Heart right ventricle (tissue), 16 donors: ENCODE measurements at regions of chr10 and their contacts with region 1.

Region 1: DNA sequence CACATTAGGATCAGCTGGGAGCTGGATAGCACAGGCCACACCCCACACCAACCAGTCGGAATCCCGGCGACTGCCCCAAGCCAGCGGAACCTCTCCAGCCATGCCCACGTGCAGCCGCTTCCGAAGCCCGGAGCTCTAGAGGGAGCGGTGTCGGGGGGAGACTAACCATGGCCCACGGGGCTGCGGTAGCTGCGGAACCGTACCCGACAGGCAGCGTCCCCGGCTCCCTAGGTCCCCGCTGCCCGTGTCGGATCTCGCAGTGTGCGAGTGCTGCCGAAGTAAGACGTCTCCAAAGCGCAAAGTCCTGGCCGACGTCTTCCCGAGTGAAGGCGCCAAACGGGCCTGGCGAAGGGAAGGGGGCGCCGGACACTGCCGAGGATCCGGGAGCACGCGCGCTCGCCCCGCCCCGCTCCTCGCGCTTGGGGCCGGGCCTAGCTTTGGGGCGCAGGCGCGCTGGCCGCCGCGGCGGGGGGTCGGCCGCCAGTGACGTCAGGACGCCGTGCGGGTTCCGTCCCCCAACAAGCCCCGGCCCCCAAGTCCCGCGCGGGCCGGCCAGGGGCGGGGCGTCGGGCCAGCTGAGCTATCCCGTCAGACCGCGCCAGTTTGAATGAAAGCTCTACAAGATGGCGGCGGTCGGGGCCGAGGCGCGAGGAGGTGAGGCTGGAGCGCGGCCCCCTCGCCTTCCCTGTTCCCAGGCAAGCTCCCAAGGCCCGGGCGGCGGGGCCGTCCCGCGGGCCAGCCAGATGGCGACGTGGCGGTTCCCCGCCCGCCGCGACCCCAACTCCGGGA is at the start of gene SUV39H2:
- DNase-seq: peak; percentile 94 to 97
- ATAC-seq: peak; percentile 94 to 99 (median 96)
- H3K4me3 ChIP-seq: peak within 1 kb of the TSS; percentile 68 to 96 (median 85)
- H3K27ac ChIP-seq: peak within 1 kb of the TSS; percentile 82 to 99 (median 96)
- H3K4me1 ChIP-seq: peaks cover 0 to 45% (median 30%) of the 10 kb centered on the region in 9 donors
- H3K27me3 ChIP-seq: no peaks in the 10 kb centered on the region
- CTCF ChIP-seq: peak in 3 of 9 donors; percentile 20 to 40 (median 37)
- total RNA-seq, gene SUV39H2: 4.3 to 9.1 (median 7.4) TPM

Region 2: GRCh38 chr10:14822879-14823755 is 55.3 kb before region 1 on chr10:
- intact Hi-C with region 1: no loop called
- DNase-seq: peak in 1 of 2 donors; percentile 23
- ATAC-seq: peak in 3 of 8 donors; percentile 49 to 51 (median 49)
- H3K4me3 ChIP-seq: no peak overlapping the region
- H3K27ac ChIP-seq: no peak overlapping the region
- H3K4me1 ChIP-seq: peaks cover 0 to 8% (median 0%) of the 10 kb centered on the region in 9 donors
- H3K27me3 ChIP-seq: no peaks in the 10 kb centered on the region
- CTCF ChIP-seq: peak; percentile 22 to 77 (median 66)

Region 3: DNA sequence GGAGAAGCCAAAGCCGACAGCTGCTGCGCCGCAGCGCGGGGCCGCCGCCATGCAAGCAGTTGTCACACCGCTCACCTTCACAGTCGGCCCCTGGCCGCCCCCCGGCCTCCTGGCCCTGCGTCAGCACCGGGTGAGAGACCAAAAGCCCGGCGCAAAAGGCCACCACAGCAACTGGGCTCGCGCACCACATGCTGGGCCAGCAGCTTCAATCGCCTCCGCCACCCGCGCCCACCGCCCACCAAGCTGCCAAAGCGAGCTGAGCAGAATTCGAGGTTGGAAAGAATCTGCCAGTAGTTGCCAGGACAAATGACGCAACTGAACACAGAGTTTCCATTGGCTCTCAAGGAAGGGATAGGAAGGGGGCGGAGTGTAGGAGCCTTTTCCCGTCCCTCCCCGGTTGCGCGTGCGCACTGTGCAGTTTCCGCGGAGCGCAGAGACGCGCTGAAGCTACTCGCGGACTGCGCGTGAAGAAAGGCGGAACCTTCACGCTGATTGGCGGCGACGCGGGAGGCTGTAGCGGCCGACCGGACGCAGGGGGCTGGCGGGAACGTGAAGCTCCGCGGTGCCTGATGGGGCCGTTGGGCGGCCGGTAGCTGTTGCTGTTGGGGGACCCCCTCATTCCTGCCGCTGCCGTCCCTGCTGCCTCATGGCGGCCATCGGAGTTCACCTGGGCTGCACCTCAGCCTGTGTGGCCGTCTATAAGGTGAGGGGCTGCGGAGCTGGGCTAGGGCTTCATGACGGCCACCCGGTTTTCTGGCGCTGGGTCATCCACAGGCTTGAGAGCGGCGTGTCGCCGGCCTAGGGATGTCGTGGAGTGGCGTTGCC is 40.5 kb before region 1 on chr10 and contains the starts of genes CDNF, HSPA14 and MSANTD7:
- intact Hi-C with region 1: loop called in 9 of 10 experiments (anchors 2 to 5 kb)
- DNase-seq: peak; percentile 99 to 100
- ATAC-seq: peak; percentile 98 to 100 (median 99)
- H3K4me3 ChIP-seq: peak within 1 kb of the TSS; percentile 80 to 99 (median 92)
- H3K27ac ChIP-seq: peak within 1 kb of the TSS; percentile 90 to 99 (median 96)
- H3K4me1 ChIP-seq: peaks cover 0 to 28% (median 24%) of the 10 kb centered on the region in 9 donors
- H3K27me3 ChIP-seq: no peaks in the 10 kb centered on the region
- CTCF ChIP-seq: peak in 1 of 9 donors; percentile 7
- total RNA-seq, gene CDNF: 2.5 to 6.3 (median 4.3) TPM
- total RNA-seq, gene HSPA14: 7.1 to 9.7 (median 8.2) TPM
- total RNA-seq, gene MSANTD7: 3.8 to 6.1 (median 5.6) TPM

Region 4: GRCh38 chr10:14843327-14843988 is 35.0 kb before region 1 on chr10:
- intact Hi-C with region 1: loop called in 9 of 10 experiments (anchors 2 to 5 kb)
- DNase-seq: no peak
- ATAC-seq: no peak
- H3K4me3 ChIP-seq: no peak overlapping the region
- H3K27ac ChIP-seq: no peak overlapping the region
- H3K4me1 ChIP-seq: peaks cover 0 to 15% (median 13%) of the 10 kb centered on the region in 9 donors
- H3K27me3 ChIP-seq: no peaks in the 10 kb centered on the region
- CTCF ChIP-seq: no peak

Region 5: DNA sequence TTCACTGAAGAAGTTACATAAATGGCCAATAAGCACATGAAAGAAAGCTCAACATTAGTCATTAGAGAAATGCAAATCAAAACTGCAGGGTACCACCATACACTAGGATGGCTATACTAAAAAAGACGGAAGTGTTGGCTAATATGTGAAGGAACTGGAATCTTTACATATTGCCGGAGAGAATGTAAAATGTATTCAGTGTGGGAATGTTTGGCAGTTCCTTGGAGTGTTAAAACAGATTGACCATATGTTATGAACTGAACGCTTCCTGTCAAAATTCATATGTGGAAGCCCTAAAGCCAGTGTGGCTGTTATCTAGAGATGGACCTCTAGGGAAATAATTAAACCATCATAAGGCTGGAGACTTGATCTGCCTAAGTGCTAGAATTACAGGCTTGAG is 33.3 kb after region 1 on chr10:
- intact Hi-C with region 1: no loop called
- DNase-seq: no peak
- ATAC-seq: no peak
- H3K4me3 ChIP-seq: no peak overlapping the region
- H3K27ac ChIP-seq: no peak overlapping the region
- H3K4me1 ChIP-seq: no peaks in the 10 kb centered on the region
- H3K27me3 ChIP-seq: no peaks in the 10 kb centered on the region
- CTCF ChIP-seq: no peak